ENCODE measurements at regions of chr11 and their contacts with region 1.

Region 1: DNA sequence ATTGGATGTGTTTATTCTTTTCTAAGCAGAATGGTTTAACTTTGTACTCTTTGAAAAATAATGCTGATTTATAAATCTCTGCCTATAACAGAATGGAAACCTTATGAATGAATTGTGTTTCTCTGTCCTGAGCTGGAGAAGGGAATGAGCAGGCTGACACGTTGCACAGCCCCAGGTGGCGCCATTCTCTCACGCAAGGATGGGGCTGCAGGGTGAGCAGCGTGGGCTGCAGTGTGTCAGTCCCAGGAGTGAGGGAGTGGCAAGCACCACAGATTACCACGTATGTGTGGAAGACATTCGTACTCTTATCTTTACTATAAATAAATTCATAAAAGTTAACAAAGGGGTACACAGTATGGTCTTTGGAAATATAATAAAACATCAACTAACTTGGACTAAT is 33.4 kb downstream of the FDX1 start:
- ATAC-seq: peak; percentile 76 to 99 (median 95)
- H3K4me3 ChIP-seq: no peak overlapping the region
- H3K27ac ChIP-seq: no peak overlapping the region
- H3K4me1 ChIP-seq: no peaks in the 10 kb centered on the region

Region 2: GRCh38 chr11:110022548-110022947 is 440.6 kb before region 1 on chr11:
- in situ Hi-C with region 1: no loop called
- ATAC-seq: peak in 2 of 8 experiments; percentile 35 to 60
- H3K4me3 ChIP-seq: no peak overlapping the region
- H3K27ac ChIP-seq: no peak overlapping the region
- H3K4me1 ChIP-seq: peaks cover 4 to 13% of the 10 kb centered on the region in 2 donors

Region 3: GRCh38 chr11:110738641-110739040 is 275.5 kb after region 1 on chr11:
- in situ Hi-C with region 1: no loop called
- ATAC-seq: no peak
- H3K4me3 ChIP-seq: no peak overlapping the region
- H3K27ac ChIP-seq: no peak overlapping the region
- H3K4me1 ChIP-seq: no peaks in the 10 kb centered on the region

Region 4: DNA sequence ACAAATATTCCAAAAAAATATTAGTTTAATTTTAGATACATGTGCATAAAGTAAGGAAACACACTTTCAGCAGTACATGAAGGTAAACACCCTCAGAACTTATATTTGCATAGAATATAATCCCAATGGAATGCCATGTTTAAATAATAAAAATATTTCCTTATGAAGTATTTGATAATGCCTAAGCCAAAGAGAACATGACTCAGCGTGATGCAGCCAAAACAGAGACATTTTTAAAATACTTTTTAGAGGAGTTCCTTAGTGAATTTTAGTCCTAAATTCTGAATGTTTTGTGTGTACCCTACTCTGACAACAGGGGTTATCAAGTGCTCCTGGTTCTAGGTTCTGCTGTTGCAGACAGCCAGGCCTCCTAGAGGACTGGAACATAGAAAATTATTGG is 743.3 kb after region 1 on chr11:
- in situ Hi-C with region 1: loop called in 1 of 9 experiments (anchors 25 kb)
- ATAC-seq: peak in 3 of 8 experiments; percentile 44 to 78 (median 55)
- H3K4me3 ChIP-seq: no peak overlapping the region
- H3K27ac ChIP-seq: no peak overlapping the region
- H3K4me1 ChIP-seq: no peaks in the 10 kb centered on the region

Region 5: GRCh38 chr11:111230122-111230465 is 766.9 kb after region 1 on chr11:
- in situ Hi-C with region 1: loop called in 4 of 9 experiments (anchors 25 kb)
- ATAC-seq: peak in 7 of 8 experiments; percentile 12 to 66 (median 40)
- H3K4me3 ChIP-seq: no peak overlapping the region
- H3K27ac ChIP-seq: no peak overlapping the region
- H3K4me1 ChIP-seq: no peaks in the 10 kb centered on the region

Region 6: DNA sequence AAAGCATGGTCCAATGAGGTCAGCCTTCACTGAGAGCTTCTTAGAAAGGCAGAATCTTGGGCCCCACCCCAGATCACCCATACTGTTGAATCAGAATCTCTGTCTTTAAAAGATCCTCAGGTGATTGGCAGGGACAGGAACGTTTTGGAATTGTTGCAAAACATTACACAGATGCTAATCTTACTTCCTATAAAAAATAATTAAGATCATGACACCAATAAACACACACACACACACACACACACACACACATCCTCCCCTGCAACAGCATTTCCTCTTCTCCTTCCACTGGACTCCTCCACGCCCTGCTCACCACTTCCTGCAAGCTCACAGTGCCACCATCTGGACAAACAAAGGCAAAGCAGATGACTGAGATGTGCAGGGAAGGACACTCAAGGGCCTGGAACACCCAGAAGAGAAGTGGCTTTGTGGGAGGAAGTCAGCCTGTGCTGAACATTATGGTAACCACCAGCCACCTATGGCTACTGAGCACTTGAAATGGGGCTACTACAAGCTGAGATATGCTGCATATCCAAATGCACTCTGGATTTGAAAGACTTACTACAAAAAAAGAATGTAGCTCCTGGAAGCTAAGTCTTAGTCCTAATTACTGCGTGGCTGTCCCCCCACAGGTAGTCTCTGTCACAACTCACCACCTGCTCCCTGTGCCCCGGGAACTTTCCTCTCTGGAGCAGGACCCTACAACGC is 983.4 kb after region 1 on chr11:
- in situ Hi-C with region 1: loop called in 1 of 9 experiments (anchors 25 kb)
- ATAC-seq: peak; percentile 89 to 100 (median 100)
- H3K4me3 ChIP-seq: no peak overlapping the region
- H3K27ac ChIP-seq: no peak overlapping the region
- H3K4me1 ChIP-seq: no peaks in the 10 kb centered on the region

Measured in motor neuron (in vitro differentiated cells).